Left cardiac atrium (tissue), 4 donors: ENCODE measurements at regions of chr20 and their contacts with region 1.

Region 1: DNA sequence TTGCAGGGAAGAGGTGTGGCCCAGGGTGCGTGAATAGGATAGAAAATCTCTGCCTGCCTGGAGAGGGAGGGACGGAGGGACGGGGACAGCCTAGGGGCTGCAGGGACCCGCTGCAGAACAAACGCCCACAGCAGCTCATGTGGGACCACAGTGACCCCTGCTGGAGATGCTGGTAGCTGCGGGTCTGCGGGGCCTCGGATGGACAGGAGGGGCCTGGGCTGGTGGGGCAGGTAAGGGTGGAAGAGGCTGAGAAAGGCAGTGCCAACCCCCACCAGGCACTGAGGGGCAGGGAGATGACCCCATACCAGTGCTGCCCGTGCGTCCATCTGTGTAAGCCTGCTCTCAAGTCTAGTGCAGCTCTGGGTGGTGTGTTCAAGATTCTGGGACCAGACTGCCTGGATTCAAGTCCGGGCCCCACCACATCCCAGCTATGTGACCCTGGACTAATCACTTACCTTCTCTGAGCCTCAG is 39.4 kb downstream of the KIAA1755 start:
- DNase-seq: peak; percentile 71
- ATAC-seq: peak; percentile 46 to 68

Region 2: DNA sequence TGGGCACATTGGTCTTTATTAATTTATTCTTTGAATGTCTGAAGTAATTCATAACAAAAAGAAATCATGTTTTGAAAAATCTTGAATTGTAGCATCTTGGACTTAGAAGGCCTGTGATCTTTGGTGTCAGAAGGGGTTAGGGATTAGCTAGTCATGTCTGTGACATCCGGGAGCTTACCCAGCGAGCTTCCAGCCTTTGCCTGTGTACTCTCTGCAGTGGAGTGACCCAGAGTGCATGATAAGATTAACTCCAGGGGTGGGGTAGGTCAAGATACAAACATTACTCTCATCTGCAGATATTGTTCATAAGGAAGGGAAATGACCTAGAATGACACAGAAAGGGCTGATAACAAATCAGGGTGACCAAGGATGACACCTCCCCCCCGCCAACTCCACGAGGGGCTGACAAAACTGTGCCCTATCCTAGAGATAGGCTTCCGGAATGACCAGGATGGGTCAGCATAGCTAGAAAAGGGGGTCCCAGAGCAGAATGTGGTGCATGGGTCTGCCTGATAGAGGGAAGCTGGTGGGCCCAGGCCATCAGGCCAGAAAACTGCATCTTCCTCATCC is 636.8 kb before region 1 on chr20:
- intact Hi-C with region 1: no loop called
- DNase-seq: no peak
- ATAC-seq: no peak

Region 3: DNA sequence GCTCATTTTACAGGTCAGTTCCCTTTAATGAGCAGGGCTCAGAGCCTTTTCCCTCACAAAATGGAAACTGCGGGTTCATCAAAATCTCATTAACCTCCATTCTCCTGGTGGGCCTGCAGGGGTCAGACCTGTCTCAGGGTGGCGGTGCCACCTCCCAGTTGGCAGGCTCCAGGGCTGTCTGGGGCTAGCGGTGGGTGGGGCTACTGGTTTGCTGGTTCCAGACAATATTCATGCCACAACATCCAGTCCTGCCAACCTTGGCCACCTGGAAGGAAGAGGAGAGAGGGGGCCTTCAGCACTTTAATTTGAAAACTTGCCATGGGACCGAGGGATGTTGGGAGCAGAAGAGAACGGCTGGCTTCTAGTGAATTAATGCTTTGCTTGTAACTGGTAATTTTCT is 569.2 kb before region 1 on chr20:
- intact Hi-C with region 1: loop called in 1 of 2 experiments (anchors 5 kb)
- DNase-seq: peak; percentile 62
- ATAC-seq: peak; percentile 87 to 88

Region 4: GRCh38 chr20:38057351-38057972 is 163.7 kb before region 1 on chr20:
- intact Hi-C with region 1: loop called (anchors 2 to 5 kb)
- DNase-seq: peak; percentile 93
- ATAC-seq: peak; percentile 92 to 94

Region 5: GRCh38 chr20:38134387-38135270 is 86.5 kb before region 1 on chr20:
- intact Hi-C with region 1: loop called in 1 of 2 experiments (anchors 10 kb)
- DNase-seq: peak; percentile 69
- ATAC-seq: peak; percentile 11 to 16

Region 6: GRCh38 chr20:38173237-38174156 is 47.7 kb before region 1 on chr20:
- intact Hi-C with region 1: loop called in 1 of 2 experiments (anchors 5 kb)
- DNase-seq: peak; percentile 86
- ATAC-seq: peak; percentile 53 to 87

Region 7: GRCh38 chr20:38825901-38826625 is 604.9 kb after region 1 on chr20:
- intact Hi-C with region 1: no loop called
- DNase-seq: no peak
- ATAC-seq: peak in 1 of 2 donors; percentile 63